Activated CD4-positive, alpha-beta memory T cell treated with anti-CD3 and anti-CD28 coated beads for 36 hours (primary cell): ENCODE measurements at regions of chr5 and their contacts with region 1.

Region 1: DNA sequence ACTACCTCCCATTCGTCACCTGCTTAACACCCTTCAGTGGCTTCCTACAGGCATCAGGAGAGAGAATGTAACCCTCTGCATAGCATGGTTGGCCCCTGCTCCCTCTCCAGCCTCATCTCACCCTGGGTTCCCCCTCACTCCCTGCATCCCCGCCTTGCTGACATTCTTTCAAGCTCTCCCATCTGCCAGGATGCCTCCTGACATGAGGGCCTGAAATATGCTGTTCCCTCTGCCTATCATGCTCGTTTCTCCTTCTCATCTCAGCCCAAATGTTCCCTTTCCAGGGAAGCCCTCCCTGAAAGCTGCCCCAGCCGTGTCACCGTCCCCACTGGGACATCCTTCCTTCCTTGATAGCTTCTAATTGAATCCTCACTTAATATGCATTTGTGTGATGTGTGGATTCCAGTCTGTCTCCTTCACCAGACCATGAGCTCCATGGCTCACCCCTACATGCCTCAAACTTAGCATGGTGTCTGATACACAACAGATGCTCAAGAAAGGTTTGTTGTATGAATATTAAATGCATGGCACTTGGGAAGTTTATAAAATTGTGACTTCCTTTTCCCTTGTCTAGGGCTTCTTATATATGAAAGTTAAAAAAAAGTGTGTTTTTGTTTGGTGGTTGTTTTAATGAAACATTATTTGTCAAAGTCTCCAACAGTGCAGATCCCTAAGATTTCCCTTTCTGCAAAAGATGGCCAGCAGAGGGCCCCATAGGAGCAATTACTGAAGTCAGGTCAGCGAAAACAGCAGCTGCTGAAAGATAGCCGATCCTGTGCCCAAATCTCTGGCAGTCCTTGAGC is 7.3 kb upstream of the C5orf58 start:
- DNase-seq: peak; percentile 81
- H3K4me3 Mint-ChIP-seq: no peak overlapping the region
- H3K27ac Mint-ChIP-seq: no peak overlapping the region
- H3K4me1 Mint-ChIP-seq: peaks cover 3% of the 10 kb centered on the region
- H3K27me3 Mint-ChIP-seq: no peaks in the 10 kb centered on the region

Region 2: DNA sequence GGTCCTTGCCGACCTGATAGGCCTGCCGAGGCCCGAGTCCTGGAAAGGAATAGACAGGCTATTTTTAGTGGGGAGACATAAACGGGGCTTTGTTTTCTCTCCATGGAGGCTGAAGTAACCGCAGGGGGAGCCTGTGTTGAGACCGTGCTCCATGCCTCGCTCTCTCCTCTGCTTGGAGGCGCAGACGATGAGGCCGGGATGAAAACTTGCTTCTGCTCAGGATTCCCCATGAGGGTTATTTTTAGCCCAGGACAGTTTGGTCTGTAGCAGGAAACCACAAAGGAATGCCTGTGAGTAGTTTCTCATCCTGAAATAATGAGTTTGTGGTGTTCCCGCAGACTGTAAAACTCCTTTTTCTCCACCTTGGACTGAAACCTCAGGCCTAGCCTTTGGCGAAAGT is 1821.2 kb before region 1 on chr5:
- CTCF ChIA-PET with region 1: no interaction called
- POLR2A ChIA-PET with region 1: no interaction called
- intact Hi-C with region 1: no loop called
- DNase-seq: no peak
- H3K4me3 Mint-ChIP-seq: no peak overlapping the region
- H3K27ac Mint-ChIP-seq: no peak overlapping the region
- H3K4me1 Mint-ChIP-seq: peaks cover 10% of the 10 kb centered on the region
- H3K27me3 Mint-ChIP-seq: no peaks in the 10 kb centered on the region

Region 3: DNA sequence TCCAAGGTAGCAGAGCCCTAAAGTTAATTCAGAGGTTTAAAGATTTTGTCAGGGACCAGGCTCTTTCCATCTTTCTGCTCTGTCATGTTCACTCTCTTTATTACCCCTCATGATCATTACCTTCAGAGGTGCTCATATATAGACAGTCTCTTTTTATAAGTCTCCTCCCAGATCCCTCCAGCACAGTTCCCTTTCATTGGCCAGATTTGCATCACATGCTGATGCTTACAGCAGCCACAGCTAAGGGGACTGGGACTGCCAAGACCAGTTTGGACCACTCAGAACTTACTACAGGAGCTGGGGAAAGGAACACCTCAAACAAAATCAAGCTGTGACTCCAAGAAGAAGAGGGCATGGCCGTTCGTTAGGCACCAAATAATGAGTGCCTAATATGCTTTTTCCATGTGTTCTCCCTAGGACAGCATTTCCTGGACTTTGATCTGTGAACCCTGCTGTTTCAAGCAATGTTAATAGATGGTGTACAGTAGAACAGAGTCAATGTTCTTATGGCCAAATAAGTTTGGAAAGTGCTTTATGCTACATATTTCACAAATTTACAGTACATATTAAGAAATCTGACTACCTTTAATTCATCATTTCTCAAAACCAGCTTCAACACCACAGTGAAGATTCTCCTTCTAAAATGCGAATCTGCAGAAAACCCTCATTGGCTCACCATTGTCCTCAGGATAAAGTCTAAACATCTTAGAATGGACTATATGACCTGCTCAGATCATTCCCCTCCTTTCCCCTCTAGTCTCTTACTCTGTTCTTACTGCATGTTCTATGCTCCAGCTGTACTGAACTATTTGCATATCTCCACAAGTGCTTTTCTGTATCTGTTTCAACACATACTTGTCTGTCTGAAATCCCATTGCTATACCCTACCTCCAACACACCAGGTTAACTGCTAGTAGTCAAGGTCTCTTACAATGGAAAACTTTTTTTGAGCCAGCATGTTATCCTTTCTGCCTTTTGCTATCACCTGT is 10.6 kb after region 1 on chr5:
- CTCF ChIA-PET with region 1: interaction called, 31 read pairs
- POLR2A ChIA-PET with region 1: no interaction called
- intact Hi-C with region 1: no loop called
- DNase-seq: no peak
- H3K4me3 Mint-ChIP-seq: no peak overlapping the region
- H3K27ac Mint-ChIP-seq: no peak overlapping the region
- H3K4me1 Mint-ChIP-seq: peaks cover 7% of the 10 kb centered on the region
- H3K27me3 Mint-ChIP-seq: no peaks in the 10 kb centered on the region

Region 4: GRCh38 chr5:170278611-170279452 is 53.3 kb after region 1 on chr5:
- CTCF ChIA-PET with region 1: interaction called, 17 read pairs
- POLR2A ChIA-PET with region 1: interaction called, 3 read pairs
- intact Hi-C with region 1: loop called (anchors 1 kb)
- DNase-seq: peak; percentile 93
- H3K4me3 Mint-ChIP-seq: peak overlapping the region; percentile 40
- H3K27ac Mint-ChIP-seq: peak overlapping the region; percentile 95
- H3K4me1 Mint-ChIP-seq: peaks cover 94% of the 10 kb centered on the region
- H3K27me3 Mint-ChIP-seq: no peaks in the 10 kb centered on the region

Region 5: GRCh38 chr5:170402508-170402907 is 177.0 kb after region 1 on chr5:
- CTCF ChIA-PET with region 1: interaction called, 10 read pairs
- POLR2A ChIA-PET with region 1: no interaction called
- intact Hi-C with region 1: no loop called
- DNase-seq: no peak
- H3K4me3 Mint-ChIP-seq: no peak overlapping the region
- H3K27ac Mint-ChIP-seq: no peak overlapping the region
- H3K4me1 Mint-ChIP-seq: no peaks in the 10 kb centered on the region
- H3K27me3 Mint-ChIP-seq: no peaks in the 10 kb centered on the region

Region 6: DNA sequence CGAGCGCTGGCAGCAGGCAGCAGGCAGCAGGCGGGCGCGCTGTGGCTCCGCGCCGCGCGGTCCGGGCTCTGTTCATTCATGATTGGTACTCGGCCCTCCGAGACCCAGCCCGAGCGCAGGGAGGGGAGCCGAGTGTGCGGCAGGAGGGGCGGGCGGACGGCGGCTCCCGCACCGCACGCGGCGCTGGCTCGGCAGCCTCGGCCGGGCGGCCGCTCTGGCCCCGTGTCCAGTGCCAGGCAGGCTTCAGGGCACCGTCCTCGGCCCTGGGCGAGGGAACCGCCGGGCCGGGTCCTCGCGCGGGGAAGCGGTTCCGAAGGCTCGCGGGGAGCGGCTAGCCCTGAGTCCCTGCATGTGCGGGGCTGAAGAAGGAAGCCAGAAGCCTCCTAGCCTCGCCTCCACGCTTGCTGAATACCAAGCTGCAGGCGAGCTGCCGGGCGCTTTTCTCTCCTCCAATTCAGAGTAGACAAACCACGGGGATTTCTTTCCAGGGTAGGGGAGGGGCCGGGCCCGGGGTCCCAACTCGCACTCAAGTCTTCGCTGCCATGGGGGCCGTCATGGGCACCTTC is 278.6 kb after region 1 on chr5:
- CTCF ChIA-PET with region 1: no interaction called
- POLR2A ChIA-PET with region 1: no interaction called
- intact Hi-C with region 1: no loop called
- DNase-seq: no peak
- H3K4me3 Mint-ChIP-seq: no peak overlapping the region
- H3K27ac Mint-ChIP-seq: no peak overlapping the region
- H3K4me1 Mint-ChIP-seq: no peaks in the 10 kb centered on the region
- H3K27me3 Mint-ChIP-seq: peaks cover 42% of the 10 kb centered on the region

Region 7: DNA sequence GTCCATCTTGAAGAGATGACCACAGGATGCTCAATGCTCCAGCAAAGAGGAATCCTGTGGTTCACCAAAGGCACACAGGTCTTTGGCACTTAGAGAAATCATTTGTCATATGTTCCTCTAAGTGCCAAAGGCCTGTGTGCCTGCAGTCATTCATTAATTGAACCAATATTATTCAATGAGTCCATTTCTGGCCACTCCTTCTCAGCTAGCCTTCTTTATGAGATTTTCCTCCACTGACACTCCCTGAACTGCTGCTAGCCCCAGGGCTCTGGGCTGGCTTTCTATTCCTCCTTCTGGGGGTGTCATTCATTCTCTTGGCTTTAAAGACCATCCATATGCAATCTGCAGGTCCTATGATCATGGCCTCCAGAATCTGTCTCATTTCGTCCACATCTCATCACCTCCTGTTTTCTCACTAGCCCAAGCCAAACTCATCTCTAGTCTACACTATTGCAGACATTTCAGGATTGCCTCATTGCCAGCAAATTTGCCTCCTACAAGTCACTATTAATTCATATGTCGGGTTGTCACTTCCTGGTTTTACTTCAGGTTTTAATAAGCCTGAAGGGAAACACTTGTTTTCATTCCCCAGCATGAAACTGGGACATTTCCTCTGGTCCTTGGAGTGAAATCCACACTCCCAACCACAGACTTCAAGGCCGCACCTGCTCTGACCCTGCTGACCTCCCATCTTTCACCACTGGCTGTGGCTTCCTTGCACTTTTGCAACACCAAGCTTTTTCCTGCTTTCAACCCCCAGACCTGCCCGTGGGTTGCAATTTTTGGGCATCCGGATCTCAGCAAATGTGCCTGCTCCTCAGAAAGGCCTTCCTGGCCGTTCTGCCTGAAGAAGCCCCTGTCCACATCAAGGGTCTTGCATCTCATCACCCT is 313.4 kb after region 1 on chr5:
- CTCF ChIA-PET with region 1: no interaction called
- POLR2A ChIA-PET with region 1: no interaction called
- intact Hi-C with region 1: no loop called
- DNase-seq: no peak
- H3K4me3 Mint-ChIP-seq: no peak overlapping the region
- H3K27ac Mint-ChIP-seq: no peak overlapping the region
- H3K4me1 Mint-ChIP-seq: no peaks in the 10 kb centered on the region
- H3K27me3 Mint-ChIP-seq: peaks cover 9% of the 10 kb centered on the region

Region 8: GRCh38 chr5:170623576-170624181 is 398.2 kb after region 1 on chr5:
- CTCF ChIA-PET with region 1: interaction called, 6 read pairs
- POLR2A ChIA-PET with region 1: no interaction called
- intact Hi-C with region 1: loop called (anchors 10 kb)
- DNase-seq: peak; percentile 64
- H3K4me3 Mint-ChIP-seq: no peak overlapping the region
- H3K27ac Mint-ChIP-seq: no peak overlapping the region
- H3K4me1 Mint-ChIP-seq: no peaks in the 10 kb centered on the region
- H3K27me3 Mint-ChIP-seq: peaks cover 6% of the 10 kb centered on the region